HEK293T (cell line): ENCODE measurements at regions of chr17 and their contacts with region 1.

Region 1: DNA sequence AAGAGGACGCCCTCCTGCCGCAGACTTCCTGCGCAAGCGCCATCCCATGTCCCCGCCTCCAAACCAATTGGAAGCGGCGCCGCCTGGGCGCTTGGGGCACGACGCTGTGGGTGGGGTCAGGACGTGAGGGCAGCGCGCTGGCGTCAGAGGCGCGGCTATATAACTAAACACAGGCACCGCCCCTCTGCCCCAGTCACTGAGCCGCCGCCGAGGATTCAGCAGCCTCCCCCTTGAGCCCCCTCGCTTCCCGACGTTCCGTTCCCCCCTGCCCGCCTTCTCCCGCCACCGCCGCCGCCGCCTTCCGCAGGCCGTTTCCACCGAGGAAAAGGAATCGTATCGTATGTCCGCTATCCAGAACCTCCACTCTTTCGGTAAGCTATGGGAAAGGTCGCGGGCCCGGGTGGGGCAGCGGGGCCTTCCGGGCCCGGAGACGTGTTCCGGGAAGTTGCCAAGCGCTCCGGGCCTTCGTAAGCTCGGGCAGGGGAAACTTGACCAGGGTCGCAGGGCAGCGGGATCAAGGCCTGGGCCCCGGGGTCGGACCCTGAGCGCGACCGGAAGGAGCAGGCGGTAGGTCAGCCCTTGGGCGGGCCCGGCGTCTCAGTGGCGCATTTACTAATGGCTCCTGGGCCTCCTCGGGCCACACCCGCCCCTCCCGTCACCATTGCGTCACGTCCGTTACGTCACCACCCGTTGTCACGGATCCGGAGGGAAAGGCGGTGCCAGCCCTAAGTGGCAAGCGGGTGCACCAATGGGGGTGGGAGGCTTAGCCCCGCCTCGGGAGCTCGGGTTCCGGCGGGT is at the start of gene EIF1:
- DNase-seq: peak; percentile 99

Region 2: GRCh38 chr17:41521574-41522261 is 167.2 kb before region 1 on chr17:
- CTCF ChIA-PET with region 1: no interaction called
- POLR2A ChIA-PET with region 1: interaction called, 11 read pairs
- DNase-seq: no peak

Region 3: DNA sequence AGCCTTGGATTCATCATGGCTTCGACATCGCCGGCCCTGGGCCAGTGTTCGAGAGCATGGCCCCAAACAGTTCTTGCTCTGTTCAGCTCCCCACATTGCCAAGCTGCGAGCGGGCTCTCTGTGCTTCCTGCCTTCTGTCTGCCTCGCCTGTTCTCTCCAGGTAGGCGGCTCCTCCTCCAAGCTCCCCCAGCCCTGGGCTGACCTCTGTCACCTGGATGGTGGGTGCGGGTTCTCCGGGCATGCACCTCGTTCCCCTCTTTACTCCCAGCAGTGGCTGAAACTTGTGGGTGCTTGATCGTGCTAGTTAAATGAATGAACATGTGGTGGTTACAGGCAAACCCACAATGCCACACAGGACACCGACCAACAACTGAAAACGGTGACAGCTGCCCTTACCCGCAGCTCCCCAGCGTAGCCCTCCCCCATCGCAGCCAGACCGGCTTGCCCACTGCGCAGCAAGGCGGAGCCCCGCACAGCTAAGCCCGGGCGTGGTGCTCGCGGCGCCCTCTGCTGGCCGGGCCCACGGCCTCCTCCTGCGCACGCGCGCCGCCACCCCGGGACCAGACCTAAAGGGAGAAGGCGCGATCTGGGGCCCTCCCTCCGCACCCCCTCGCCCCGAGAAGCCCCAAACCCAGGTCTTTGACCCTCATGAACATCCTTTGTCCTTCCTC is 23.2 kb before region 1 on chr17:
- CTCF ChIA-PET with region 1: interaction called, 10 read pairs
- POLR2A ChIA-PET with region 1: interaction called, 145 read pairs
- DNase-seq: peak; percentile 97

Region 4: GRCh38 chr17:41724476-41725050 is 35.7 kb after region 1 on chr17:
- CTCF ChIA-PET with region 1: no interaction called
- POLR2A ChIA-PET with region 1: interaction called, 55 read pairs
- DNase-seq: no peak

Region 5: DNA sequence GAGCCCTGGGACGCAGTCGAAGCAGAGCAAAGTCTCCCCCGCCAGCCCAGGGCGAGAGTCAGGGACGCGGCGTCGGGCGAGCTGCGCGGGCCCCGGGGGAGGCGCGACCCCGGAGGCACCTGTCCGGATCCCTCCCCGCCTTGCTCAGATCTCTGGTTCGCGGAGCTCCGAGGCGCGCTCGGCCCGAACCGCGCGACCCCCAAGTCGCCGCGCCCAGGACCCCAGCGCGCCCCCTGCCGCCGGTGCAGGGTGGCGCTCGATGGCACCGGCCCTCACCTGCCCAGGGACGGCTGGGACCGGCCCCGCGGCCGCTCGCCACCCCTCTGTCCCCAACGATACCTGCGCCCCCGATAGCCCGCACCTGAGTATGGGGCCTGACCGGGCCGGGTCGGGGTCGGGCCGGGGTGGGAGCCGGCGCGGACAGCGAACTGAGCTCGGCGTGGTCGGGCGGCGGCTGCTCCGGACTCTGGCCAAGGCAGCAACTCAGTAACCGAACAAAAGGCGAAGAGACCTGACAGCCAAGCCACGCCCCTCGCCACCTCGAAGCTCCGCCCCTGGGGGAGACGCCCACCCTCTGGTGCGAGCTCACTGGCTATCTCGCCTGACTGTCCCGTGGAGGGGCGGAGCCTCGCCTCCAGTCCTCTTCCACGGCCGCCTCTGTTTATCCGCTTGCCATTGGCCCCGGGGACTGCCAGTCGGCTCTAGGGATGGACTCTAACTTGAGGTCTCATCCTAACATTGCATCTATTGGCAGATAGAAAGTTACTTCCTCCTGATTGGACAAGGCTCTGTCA is 97.5 kb after region 1 on chr17 and contains the start of gene JUP:
- CTCF ChIA-PET with region 1: interaction called, 9 read pairs
- POLR2A ChIA-PET with region 1: interaction called, 40 read pairs
- DNase-seq: peak; percentile 100

Region 6: DNA sequence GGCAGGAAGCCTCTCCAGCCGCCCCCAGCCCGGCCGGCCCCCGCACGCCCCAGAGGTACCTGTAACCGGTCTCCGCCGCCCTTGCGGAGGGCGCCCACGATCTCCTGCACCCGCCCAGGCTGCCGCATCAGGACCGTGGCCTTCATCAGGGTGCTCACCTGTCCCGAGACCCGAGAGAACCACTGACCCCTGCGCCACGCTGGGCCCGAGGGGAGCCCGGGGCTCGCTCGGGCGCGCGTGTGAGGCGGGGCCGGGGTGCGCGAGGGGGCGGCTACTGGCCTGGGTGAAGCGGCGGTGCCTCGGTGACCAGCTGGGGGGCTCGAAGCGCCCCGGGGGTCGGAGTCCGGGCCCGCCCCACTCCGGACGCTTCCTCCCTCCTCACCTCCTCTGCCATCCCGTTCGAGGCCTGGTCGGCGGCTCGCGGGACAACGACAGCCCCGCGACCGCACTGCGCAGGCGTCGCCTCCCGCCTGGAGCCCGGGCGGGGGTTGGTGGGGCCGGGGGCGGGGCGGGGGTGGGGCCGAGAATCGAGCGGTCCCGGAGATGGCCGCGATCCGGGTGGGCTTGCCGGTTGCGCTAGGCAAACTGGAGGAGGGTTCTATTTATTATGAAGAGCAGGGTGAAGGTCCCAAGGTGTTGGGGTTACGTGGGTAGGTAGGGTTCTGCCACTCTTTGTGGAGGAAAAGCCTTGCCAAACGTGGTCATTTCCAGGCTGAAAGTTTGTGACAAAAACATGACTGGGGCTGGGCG is 147.1 kb after region 1 on chr17 and contains the start of gene NT5C3B:
- CTCF ChIA-PET with region 1: interaction called, 3 read pairs
- POLR2A ChIA-PET with region 1: interaction called, 10 read pairs
- DNase-seq: peak; percentile 98

Region 7: DNA sequence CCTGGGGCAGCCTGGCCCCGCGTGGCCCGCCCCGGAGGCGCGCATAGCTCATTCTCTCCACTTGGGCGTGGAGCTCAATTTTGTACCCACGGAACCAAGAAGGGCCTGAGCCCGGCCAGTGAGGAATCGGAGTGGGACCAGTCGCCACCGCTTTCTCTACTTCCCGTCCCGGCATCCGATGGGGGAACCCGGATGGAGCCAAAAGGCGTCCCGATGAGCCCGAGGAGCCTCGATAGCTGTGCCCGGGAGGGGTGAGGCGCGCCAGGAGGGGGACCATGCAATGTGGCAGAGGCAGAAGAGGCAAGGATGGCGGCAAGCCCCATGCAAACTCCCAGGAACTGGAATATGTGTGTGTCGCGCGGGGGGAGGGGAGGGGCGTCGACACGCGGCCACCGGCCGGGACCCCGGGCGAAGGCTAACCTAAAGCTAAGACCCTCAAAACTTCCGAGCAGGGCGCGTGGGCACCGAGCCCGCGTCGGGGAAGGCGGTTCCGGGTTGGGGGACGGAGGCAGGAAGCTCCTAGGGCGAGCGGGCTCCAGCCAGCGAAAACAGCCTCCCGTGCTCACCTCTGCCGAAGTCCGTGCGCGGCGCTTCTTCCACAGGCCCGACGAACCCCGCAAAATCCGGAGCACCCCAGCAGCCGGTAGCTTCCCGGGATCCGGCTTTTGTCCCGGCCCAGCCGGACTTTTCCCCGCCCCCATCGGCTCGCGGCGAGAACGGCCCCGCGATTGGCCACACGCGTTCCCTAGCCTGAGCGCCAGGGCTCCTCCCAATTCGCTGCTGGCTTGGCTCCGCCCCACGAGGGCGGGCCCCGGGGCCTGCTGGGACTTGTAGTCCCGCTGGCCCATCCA is 229.6 kb after region 1 on chr17 and contains the start of gene ACLY:
- CTCF ChIA-PET with region 1: no interaction called
- POLR2A ChIA-PET with region 1: interaction called, 35 read pairs
- DNase-seq: peak; percentile 100